ENCODE measurements at regions of chr9 and their contacts with region 1.

Region 1: DNA sequence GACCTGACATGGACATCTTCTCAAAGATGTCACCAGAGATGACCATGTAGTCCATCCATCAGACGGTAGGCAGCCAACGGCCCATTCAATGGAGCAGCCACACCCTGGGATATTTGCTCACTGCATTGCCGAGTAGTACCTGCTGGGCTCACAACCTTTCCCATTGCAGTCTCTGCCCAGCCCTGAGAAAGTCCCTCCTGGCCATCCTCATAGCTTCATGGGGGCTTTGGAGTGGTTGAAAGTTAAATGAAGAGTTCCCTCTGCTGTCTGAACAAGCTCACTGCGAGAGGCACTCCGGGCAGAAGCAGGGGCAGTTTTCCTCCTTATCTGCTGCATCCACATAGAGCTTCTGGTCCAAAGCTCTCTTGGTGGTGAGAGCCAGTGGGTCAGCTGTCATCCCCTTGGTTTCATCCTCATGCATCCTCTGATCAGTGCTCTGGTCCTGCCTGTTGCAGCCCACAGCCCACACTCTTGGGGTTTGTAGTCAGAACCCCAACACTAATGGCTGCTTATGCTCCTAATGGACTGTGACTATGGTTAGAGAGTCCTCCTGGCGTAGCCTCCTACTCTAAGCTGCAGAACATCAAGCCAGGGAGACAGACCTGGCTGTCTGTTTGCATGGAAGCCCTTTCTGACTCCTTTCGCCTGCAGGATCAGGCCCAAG is 23.4 kb downstream of the TNFSF8 start:
- DNase-seq: peak; percentile 54 to 63
- H3K4me3 ChIP-seq: no peak overlapping the region
- H3K27ac ChIP-seq: no peak overlapping the region
- H3K4me1 ChIP-seq: no peaks in the 10 kb centered on the region
- H3K27me3 ChIP-seq: peaks cover 0 to 2% (median 0%) of the 10 kb centered on the region in 4 experiments; a peak in 1 of 7 replicates
- CTCF ChIP-seq: peak; percentile 58 to 96 (median 92)
- EP300 ChIP-seq: peak in 1 of 2 experiments; percentile 13; a peak in 1 of 3 replicates
- POLR2A ChIP-seq: no peak
- RAD21 ChIP-seq: peak; percentile 97 to 99

Region 2: GRCh38 chr9:114662081-114662989 is 244.7 kb before region 1 on chr9:
- CTCF ChIA-PET with region 1: interaction called, 12 read pairs
- POLR2A ChIA-PET with region 1: no interaction called
- DNase-seq: peak in 1 of 2 experiments; percentile 89
- H3K4me3 ChIP-seq: no peak overlapping the region
- H3K27ac ChIP-seq: no peak overlapping the region
- H3K4me1 ChIP-seq: peaks cover 0 to 11% (median 6%) of the 10 kb centered on the region in 4 experiments; a peak in 4 of 7 replicates
- H3K27me3 ChIP-seq: no peaks in the 10 kb centered on the region
- CTCF ChIP-seq: peak; percentile 70 to 90 (median 90)
- EP300 ChIP-seq: no peak
- POLR2A ChIP-seq: no peak
- RAD21 ChIP-seq: peak; percentile 81 to 87

Region 3: GRCh38 chr9:114745108-114745848 is 161.8 kb before region 1 on chr9:
- CTCF ChIA-PET with region 1: interaction called, 269 read pairs
- POLR2A ChIA-PET with region 1: no interaction called
- DNase-seq: no peak
- H3K4me3 ChIP-seq: no peak overlapping the region
- H3K27ac ChIP-seq: no peak overlapping the region
- H3K4me1 ChIP-seq: no peaks in the 10 kb centered on the region
- H3K27me3 ChIP-seq: no peaks in the 10 kb centered on the region
- CTCF ChIP-seq: no peak
- EP300 ChIP-seq: no peak
- POLR2A ChIP-seq: no peak
- RAD21 ChIP-seq: no peak

Region 4: GRCh38 chr9:114919611-114920010 is 12.6 kb after region 1 on chr9:
- CTCF ChIA-PET with region 1: interaction called, 36 read pairs
- POLR2A ChIA-PET with region 1: no interaction called
- DNase-seq: no peak
- H3K4me3 ChIP-seq: no peak overlapping the region
- H3K27ac ChIP-seq: no peak overlapping the region
- H3K4me1 ChIP-seq: peaks cover 0 to 2% (median 0%) of the 10 kb centered on the region in 4 experiments; a peak in 2 of 7 replicates
- H3K27me3 ChIP-seq: peaks cover 39 to 73% (median 60%) of the 10 kb centered on the region in 4 experiments
- CTCF ChIP-seq: no peak
- EP300 ChIP-seq: no peak
- POLR2A ChIP-seq: no peak
- RAD21 ChIP-seq: no peak

Region 5: DNA sequence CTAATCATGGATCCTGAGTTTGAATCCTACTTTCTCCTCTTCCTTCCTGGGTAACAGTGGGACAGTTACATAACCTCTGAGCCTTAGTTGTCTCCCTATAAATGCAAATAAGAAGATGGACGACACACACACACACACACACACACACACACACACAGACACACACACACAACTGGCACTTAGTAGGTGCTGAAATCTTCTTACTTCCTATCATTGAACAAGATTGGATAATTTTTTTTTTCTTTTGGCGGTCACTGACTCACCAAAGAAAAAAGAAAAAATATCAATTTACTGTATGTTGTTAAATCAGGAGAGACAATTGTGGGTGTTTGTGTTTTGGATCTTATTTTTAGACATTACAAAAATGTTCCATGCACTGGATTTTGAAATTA is 51.8 kb after region 1 on chr9:
- CTCF ChIA-PET with region 1: interaction called, 10 read pairs
- POLR2A ChIA-PET with region 1: no interaction called
- DNase-seq: no peak
- H3K4me3 ChIP-seq: no peak overlapping the region
- H3K27ac ChIP-seq: no peak overlapping the region
- H3K4me1 ChIP-seq: no peaks in the 10 kb centered on the region
- H3K27me3 ChIP-seq: no peaks in the 10 kb centered on the region; a peak in 1 of 7 replicates
- CTCF ChIP-seq: no peak
- EP300 ChIP-seq: no peak
- POLR2A ChIP-seq: no peak
- RAD21 ChIP-seq: no peak

Measured in H1 (cell line).